ENCODE measurements at regions of chr22 and their contacts with region 1.

Region 1: DNA sequence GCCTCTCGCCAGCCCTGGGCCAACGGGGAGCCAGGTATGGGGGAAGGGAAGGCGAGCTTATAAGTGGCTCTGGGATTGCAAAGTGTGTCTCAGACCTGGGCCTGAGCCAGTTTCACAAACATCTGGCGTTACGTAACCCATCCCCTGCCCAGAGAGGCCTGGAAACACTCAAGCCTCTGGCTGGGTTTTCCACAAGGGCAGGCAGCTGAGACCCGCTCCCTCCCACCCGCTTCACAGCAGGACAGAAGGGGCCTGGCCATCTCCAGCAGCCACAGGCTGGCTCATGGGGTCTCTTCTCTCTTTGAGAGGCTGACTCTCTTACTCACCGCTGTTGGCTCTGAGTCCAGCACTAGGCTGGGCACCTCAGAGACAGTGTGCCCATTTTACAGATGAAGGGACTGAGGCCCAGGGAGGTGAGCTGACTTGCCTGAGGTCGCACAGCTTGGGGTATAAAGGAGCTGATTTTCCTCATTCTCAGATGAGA is 44.5 kb downstream of the TRIOBP start:
- DNase-seq: peak in 2 of 3 donors; percentile 48
- H3K4me3 ChIP-seq: no peak overlapping the region
- H3K27ac ChIP-seq: no peak overlapping the region
- H3K4me1 ChIP-seq: peaks cover 0 to 35% (median 22%) of the 10 kb centered on the region in 4 experiments
- H3K27me3 ChIP-seq: no peaks in the 10 kb centered on the region

Region 2: DNA sequence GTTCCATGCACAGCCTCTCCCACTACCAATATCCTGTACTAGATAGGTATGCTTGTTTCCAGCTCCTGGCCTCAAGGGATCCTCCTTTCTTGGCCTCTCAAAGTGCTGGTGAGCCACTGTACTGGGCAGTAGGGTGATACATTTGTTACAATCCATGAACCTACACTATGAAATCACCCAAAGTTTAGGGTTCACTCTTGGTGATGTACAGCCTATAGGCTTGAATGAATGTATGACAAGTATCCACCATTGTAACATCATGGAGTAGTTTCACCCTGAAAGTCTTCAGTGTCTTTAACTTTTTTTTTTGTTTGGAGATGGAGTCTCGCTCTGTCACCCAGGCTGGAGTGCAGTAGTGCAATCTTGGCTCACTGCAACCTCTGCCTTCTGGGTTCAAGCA is 12.7 kb before region 1 on chr22:
- CTCF ChIA-PET with region 1: interaction called, 3 read pairs
- POLR2A ChIA-PET with region 1: interaction called, 10 read pairs
- DNase-seq: no peak
- H3K4me3 ChIP-seq: peak overlapping the region in 3 of 7 experiments; percentile 27 to 48 (median 34)
- H3K27ac ChIP-seq: peak overlapping the region in 1 of 2 experiments; percentile 32
- H3K4me1 ChIP-seq: peaks cover 0 to 46% (median 31%) of the 10 kb centered on the region in 4 experiments
- H3K27me3 ChIP-seq: no peaks in the 10 kb centered on the region